Activated B cell treated with CpG ODN at 0.5 μM for 24 hours (primary cell): ENCODE measurements at regions of chrX and their contacts with region 1.

Region 1: GRCh38 chrX:101383679-101384205 is 2.2 kb downstream of the BTK start:
- DNase-seq: no peak
- ATAC-seq: peak; percentile 51
- H3K4me3 Mint-ChIP-seq: peak overlapping the region; percentile 97
- H3K27ac Mint-ChIP-seq: peak overlapping the region; percentile 98
- H3K4me1 Mint-ChIP-seq: peaks cover 49% of the 10 kb centered on the region
- H3K27me3 Mint-ChIP-seq: no peaks in the 10 kb centered on the region
- CTCF ChIP-seq: no peak

Region 2: GRCh38 chrX:101370888-101371504 is 12.7 kb before region 1 on chrX:
- CTCF ChIA-PET with region 1: interaction called, 3 read pairs
- POLR2A ChIA-PET with region 1: interaction called, 8 read pairs
- intact Hi-C with region 1: loop called (anchors 1 kb)
- DNase-seq: no peak
- ATAC-seq: peak; percentile 85
- H3K4me3 Mint-ChIP-seq: peak overlapping the region; percentile 64
- H3K27ac Mint-ChIP-seq: peak overlapping the region; percentile 81
- H3K4me1 Mint-ChIP-seq: peaks cover 52% of the 10 kb centered on the region
- H3K27me3 Mint-ChIP-seq: no peaks in the 10 kb centered on the region
- CTCF ChIP-seq: no peak

Region 3: DNA sequence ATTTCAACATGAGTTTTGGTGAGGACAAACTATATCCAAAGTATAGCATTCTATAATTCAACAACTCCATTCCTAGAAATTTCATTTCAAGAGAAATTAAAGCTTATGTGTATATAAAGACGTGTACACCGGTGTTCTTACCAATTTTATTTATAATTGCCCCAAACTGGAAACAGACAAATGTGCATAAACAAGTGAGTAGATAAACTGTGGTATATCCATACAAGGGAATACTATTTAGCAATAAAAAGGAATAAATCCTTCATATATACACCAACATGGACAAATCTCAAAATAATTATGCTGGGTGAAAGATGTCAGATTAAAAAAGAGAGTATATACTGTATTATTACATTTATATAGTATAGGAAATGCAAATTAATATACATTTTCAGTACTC is 44.2 kb after region 1 on chrX:
- CTCF ChIA-PET with region 1: no interaction called
- POLR2A ChIA-PET with region 1: interaction called, 12 read pairs
- intact Hi-C with region 1: no loop called
- DNase-seq: no peak
- ATAC-seq: no peak
- H3K4me3 Mint-ChIP-seq: no peak overlapping the region
- H3K27ac Mint-ChIP-seq: no peak overlapping the region
- H3K4me1 Mint-ChIP-seq: no peaks in the 10 kb centered on the region
- H3K27me3 Mint-ChIP-seq: no peaks in the 10 kb centered on the region
- CTCF ChIP-seq: no peak

Region 4: GRCh38 chrX:102044496-102044895 is 660.8 kb after region 1 on chrX:
- CTCF ChIA-PET with region 1: no interaction called
- POLR2A ChIA-PET with region 1: no interaction called
- intact Hi-C with region 1: no loop called
- DNase-seq: no peak
- ATAC-seq: no peak
- H3K4me3 Mint-ChIP-seq: no peak overlapping the region
- H3K27ac Mint-ChIP-seq: no peak overlapping the region
- H3K4me1 Mint-ChIP-seq: no peaks in the 10 kb centered on the region
- H3K27me3 Mint-ChIP-seq: no peaks in the 10 kb centered on the region
- CTCF ChIP-seq: no peak